ENCODE measurements at regions of chr14 and their contacts with region 1.

Region 1: DNA sequence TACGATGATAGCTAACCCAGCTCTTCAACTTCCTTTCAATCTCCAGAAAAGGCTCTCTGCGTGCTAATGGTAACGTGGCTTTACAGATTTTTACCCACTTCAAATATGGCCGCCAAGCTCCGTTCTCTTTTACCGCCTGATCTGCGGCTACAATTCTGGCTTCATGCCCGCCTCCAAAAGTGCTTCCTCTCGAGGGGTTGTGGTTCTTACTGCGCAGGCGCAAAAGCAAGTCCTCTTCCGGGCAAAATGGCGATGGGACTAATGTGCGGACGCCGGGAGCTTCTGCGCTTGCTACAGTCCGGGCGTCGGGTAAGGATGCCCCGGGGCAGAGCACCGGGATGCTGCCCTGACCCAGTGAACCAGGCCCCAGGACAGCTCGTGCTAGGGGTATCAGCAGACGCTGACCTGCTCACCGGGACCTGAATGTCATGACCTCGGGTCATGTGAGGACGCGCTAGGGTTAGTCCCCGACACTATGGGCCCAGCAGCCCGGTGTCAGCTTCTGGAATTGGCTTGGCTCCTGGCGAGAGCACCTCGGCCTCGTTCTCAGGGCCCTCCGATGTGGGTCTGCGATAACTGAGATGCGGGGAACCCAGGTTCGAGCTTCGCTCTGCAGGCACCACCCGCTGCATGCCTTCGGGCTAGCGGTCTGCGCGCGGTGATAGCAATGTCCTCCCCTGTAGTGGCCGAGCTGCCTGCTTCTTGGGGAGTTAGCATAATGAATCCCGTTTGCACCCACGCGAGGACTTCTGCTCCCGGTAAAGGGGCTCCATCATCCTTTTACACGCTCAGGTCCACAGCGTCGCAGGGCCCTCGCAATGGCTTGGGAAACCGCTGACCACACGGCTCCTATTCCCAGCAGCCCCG is at the start of gene OXA1L:
- DNase-seq: peak; percentile 97
- H3K4me3 Mint-ChIP-seq: peak within 1 kb of the TSS; percentile 93
- H3K27ac Mint-ChIP-seq: peak within 1 kb of the TSS; percentile 97
- H3K4me1 Mint-ChIP-seq: peaks cover 35% of the 10 kb centered on the region
- H3K27me3 Mint-ChIP-seq: no peaks in the 10 kb centered on the region
- total RNA-seq, gene OXA1L: 118 to 122 TPM

Region 2: DNA sequence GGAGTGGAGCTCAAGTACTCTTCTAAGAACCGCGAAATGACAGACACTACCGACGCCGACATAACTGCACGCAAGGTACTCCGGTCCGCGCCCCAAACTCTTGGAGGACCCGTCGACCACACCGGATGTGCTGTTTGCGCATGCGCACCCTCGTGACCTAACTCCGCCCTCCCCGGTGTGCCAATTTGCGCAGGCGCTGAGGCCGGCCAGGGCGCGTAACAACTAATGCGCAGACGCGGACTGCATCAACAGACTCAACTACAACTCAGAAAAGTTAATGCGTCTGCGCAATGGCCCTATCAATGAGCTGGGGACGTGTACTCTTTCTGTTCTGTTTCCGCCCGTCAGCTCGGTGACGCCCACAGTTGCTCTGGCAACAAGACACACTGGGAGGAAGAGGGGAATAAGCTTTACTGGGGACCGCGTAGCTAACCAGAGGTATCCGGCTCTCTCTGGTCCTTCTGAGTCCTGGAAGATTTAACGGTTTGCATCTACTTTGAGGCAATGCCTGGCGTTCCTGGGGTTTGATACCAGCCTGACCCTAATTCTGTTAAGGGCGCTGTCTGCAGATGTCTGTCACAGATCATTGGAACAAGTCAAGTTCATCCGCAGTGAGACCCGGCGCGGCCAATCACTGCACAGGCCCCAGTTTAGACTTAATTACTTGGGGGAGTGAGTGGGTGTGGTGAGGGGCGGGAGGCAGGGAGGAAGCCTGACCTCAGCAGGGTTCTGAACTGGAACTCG is 177.4 kb before region 1 on chr14 and contains the start of gene DAD1:
- CTCF ChIA-PET with region 1: interaction called, 22 read pairs
- POLR2A ChIA-PET with region 1: interaction called, 39 read pairs
- DNase-seq: peak; percentile 100
- H3K4me3 Mint-ChIP-seq: peak within 1 kb of the TSS; percentile 93
- H3K27ac Mint-ChIP-seq: peak within 1 kb of the TSS; percentile 98
- H3K4me1 Mint-ChIP-seq: peaks cover 55% of the 10 kb centered on the region
- H3K27me3 Mint-ChIP-seq: peaks cover 6% of the 10 kb centered on the region
- total RNA-seq, gene DAD1: 160 to 167 TPM

Region 3: GRCh38 chr14:22598099-22598899 is 168.4 kb before region 1 on chr14 and contains the start of gene ABHD4:
- CTCF ChIA-PET with region 1: interaction called, 5 read pairs
- POLR2A ChIA-PET with region 1: interaction called, 11 read pairs
- DNase-seq: peak; percentile 79
- H3K4me3 Mint-ChIP-seq: peak within 1 kb of the TSS; percentile 88
- H3K27ac Mint-ChIP-seq: peak within 1 kb of the TSS; percentile 69
- H3K4me1 Mint-ChIP-seq: peaks cover 25% of the 10 kb centered on the region
- H3K27me3 Mint-ChIP-seq: peaks cover 14% of the 10 kb centered on the region
- total RNA-seq, gene ABHD4: 16.7 to 20.7 TPM

Region 4: DNA sequence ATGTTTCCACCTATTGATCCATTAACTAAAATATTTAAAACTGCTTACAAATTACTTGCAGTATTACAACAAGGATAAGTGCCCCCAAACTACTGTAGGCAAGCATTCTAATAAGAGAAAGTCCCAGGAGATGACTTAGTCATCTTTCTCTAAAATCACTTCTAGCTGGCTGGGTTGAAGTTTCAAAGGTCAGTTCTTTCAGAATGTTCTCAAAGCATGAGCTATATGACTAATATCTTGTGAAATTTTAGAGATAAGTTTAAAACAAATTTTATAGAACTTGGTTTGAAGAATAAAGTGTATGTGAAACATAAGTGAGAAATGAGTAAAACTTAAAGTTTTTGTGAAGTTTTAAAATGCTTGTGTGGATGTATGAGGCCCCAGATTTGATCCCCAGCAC is 98.3 kb before region 1 on chr14:
- CTCF ChIA-PET with region 1: no interaction called
- POLR2A ChIA-PET with region 1: no interaction called
- DNase-seq: no peak
- H3K4me3 Mint-ChIP-seq: no peak overlapping the region
- H3K27ac Mint-ChIP-seq: no peak overlapping the region
- H3K4me1 Mint-ChIP-seq: peaks cover 7% of the 10 kb centered on the region
- H3K27me3 Mint-ChIP-seq: peaks cover 7% of the 10 kb centered on the region

Region 5: DNA sequence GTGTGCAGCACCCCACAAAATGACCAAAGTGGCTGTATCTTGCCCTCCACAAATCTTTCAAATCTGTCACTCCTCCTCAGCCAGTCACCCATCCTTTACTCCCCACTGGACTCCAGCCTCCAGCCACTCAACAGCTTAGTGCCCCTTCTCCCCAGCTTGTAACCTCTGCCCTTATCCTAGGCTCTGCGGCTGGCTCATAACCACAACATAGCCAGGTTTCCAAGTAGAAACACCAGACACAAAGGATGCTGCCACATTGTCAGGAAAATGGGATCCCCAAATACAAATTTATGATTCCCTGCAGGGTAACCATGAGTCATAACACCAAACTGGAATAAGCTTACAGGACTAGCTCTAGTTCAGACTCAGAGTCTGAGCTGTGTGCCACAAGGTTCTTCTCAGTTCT is 14.9 kb after region 1 on chr14:
- CTCF ChIA-PET with region 1: interaction called, 5 read pairs
- POLR2A ChIA-PET with region 1: interaction called, 17 read pairs
- DNase-seq: no peak
- H3K4me3 Mint-ChIP-seq: no peak overlapping the region
- H3K27ac Mint-ChIP-seq: no peak overlapping the region
- H3K4me1 Mint-ChIP-seq: peaks cover 5% of the 10 kb centered on the region
- H3K27me3 Mint-ChIP-seq: no peaks in the 10 kb centered on the region

Region 6: DNA sequence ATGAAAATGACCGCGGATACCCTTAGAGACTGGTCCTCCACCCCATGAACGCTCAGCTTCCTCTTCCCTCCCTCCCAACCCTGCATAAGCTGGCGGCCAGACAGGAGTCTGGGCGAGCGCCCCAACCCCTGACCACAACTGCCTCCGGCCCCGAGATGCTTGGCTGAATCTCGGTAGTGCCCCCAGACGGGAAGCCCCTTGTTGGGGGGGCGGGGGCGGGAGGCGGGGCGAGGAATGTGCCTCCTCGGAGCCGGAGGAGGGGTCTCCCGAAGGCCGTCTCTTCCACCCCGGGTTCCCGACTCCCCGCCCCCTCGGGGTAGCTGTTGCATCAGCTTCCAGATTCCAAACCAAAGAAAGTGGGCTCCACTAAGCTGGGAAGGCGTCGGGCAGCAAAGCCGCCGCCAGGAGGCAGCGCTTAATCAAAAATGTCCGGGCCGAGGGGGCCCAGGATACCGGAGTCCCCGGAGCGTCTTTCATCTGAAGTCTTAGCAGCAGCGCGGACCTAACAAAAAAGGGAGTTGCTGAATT is 55.9 kb after region 1 on chr14:
- CTCF ChIA-PET with region 1: interaction called, 3 read pairs
- POLR2A ChIA-PET with region 1: interaction called, 10 read pairs
- DNase-seq: peak; percentile 71
- H3K4me3 Mint-ChIP-seq: peak overlapping the region; percentile 39
- H3K27ac Mint-ChIP-seq: no peak overlapping the region
- H3K4me1 Mint-ChIP-seq: peaks cover 36% of the 10 kb centered on the region
- H3K27me3 Mint-ChIP-seq: peaks cover 19% of the 10 kb centered on the region

Region 7: GRCh38 chr14:22829661-22830442 is 63.2 kb after region 1 on chr14 and contains the start of gene MRPL52:
- CTCF ChIA-PET with region 1: interaction called, 4 read pairs
- POLR2A ChIA-PET with region 1: interaction called, 19 read pairs
- DNase-seq: peak; percentile 93
- H3K4me3 Mint-ChIP-seq: peak within 1 kb of the TSS; percentile 87
- H3K27ac Mint-ChIP-seq: peak within 1 kb of the TSS; percentile 90
- H3K4me1 Mint-ChIP-seq: peaks cover 33% of the 10 kb centered on the region
- H3K27me3 Mint-ChIP-seq: no peaks in the 10 kb centered on the region
- total RNA-seq, gene MRPL52: 108 to 119 TPM

Region 8: DNA sequence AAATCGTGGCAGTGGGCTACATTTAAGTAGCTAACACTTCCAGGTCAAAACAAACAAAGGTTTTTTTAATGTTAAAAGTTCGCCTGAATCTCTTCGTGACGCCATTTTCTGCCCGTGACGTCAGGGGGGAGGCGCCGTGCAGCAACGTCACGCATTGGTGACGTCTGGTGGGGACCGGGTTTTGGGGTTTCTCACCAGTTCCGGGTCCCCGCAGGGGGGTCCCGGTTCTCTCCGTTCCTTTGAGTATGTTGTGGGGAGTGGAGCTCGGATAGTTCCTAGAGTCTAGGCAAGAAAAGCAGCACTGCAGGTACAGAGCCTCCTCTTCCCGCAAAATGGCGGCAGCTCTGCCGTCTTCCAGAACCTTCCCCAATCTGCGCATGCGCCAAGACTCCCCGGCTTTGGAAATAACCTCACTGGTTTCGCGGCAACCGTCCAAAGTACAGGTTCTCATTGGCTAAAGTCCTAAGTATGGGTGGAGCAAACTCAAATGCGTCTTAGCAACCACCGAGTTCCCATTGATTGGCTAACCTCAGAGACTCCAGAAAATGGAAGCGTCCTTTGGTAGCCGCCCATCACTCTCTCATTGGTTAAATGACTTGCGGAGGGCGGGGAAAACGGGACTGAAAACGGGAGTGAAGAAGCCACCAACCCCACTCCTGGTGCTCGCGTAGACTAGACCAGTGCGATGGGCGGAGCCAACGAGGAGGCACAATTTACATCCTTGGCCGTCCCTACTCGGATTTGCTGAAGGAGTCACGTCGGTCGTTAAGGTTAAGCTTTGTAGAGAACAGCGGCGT is 152.3 kb after region 1 on chr14 and contains the start of gene RBM23:
- CTCF ChIA-PET with region 1: interaction called, 6 read pairs
- POLR2A ChIA-PET with region 1: interaction called, 21 read pairs
- DNase-seq: peak; percentile 100
- H3K4me3 Mint-ChIP-seq: peak within 1 kb of the TSS; percentile 90
- H3K27ac Mint-ChIP-seq: peak within 1 kb of the TSS; percentile 98
- H3K4me1 Mint-ChIP-seq: peaks cover 42% of the 10 kb centered on the region
- H3K27me3 Mint-ChIP-seq: no peaks in the 10 kb centered on the region
- total RNA-seq, gene RBM23: 71.8 to 73.5 TPM